AG04450 (cell line): ENCODE measurements at regions of chr9 and their contacts with region 1.

Region 1: GRCh38 chr9:12884737-12885414 is 110.1 kb downstream of the LURAP1L start:
- DNase-seq: peak; percentile 74
- H3K4me3 ChIP-seq: no peak overlapping the region
- H3K27ac ChIP-seq: no peak overlapping the region
- H3K27me3 ChIP-seq: no peaks in the 10 kb centered on the region
- CTCF ChIP-seq: peak; percentile 69

Region 2: DNA sequence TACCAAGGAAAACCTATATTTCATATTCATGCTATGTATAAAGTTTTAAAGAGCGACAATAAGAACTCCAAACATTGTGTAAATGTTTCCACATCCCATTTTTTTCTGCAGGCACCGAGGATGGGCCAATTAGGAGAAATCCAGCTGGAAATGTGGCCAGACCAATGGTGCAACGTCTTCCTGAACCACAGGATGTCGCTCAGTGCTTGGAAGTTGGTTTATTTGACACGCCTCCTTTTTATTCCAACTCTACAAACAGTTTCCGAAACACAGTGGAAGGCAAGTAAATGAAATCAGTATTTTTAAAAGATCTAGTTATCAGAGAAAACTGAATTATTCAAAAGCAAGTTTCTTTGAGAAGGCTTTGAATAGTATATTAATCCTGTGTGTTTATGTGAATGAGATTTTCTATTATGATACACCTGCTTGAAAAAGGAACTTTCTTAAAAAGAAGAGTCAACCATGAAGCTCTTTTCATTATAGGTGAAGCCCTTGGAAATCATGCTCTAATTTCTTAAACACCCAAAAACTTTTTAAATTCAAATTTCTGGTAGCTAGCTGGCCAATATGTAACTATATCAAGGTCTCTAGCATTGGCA is 182.6 kb before region 1 on chr9:
- CTCF ChIA-PET with region 1: interaction called, 17 read pairs
- POLR2A ChIA-PET with region 1: no interaction called
- DNase-seq: no peak
- H3K4me3 ChIP-seq: no peak overlapping the region
- H3K27ac ChIP-seq: no peak overlapping the region
- H3K27me3 ChIP-seq: no peaks in the 10 kb centered on the region
- CTCF ChIP-seq: peak; percentile 66

Region 3: DNA sequence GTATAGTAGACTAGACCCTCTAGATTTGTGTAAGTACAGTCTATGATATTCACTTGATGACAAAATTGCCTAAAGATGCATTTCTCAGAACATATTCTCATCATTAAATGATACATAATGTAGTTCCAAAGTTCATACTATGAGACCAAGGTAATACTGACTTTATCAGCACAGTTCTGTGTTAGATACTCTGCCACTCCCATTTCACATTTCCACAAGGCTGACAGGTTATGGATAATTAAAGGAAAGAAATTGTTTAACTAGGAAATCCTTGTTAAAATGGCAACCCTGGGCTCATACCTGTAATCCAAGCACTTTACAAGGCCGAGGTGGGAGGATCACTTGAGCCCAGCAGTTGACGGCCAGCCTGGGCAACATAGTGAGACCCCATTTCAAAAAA is 158.1 kb before region 1 on chr9:
- CTCF ChIA-PET with region 1: interaction called, 102 read pairs
- POLR2A ChIA-PET with region 1: interaction called, 3 read pairs
- DNase-seq: no peak
- H3K4me3 ChIP-seq: no peak overlapping the region
- H3K27ac ChIP-seq: no peak overlapping the region
- H3K27me3 ChIP-seq: no peaks in the 10 kb centered on the region
- CTCF ChIP-seq: no peak